ENCODE measurements at regions of chr1 and their contacts with region 1.

Region 1: DNA sequence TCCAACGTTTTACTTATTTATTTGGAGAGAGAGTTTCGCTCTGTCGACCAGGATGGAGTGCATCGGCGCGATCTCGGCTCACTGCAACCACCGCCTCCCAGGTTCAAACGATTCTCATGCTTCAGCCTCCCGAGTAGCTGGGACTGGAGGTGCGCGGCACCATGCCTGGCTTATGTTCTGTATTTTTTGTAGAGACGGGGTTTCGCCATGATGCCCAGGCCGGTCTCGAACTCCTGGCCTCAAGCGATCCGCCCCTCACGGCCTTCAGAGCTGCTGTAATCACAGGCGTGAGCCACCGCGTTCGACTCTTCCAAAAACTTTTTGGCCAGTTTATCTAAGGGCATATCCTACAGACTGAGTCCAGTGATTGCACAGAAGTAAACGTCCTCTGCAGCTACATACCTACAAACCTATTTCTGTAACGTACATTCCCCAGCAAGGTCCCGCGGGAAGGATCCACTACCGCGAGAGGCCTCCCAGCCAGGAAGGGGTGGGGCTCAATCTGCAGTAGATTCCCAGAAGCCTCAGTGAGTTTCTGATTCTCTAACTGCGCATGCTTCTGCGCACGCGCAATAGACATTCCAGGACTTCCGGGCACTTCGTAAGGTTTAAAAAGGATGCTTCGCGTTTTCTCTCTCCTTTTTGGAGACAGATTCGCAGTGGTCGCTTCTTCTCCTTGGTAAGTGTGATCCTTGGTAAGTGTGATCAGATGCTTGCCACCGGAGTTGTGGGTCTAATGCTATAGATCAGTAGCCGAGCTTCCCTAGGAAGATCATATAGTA is at the start of gene RCC1:
- DNase-seq: peak; percentile 98
- H3K4me3 Mint-ChIP-seq: peak within 1 kb of the TSS; percentile 99
- H3K27ac Mint-ChIP-seq: peak within 1 kb of the TSS; percentile 98
- H3K4me1 Mint-ChIP-seq: peaks cover 22% of the 10 kb centered on the region
- H3K27me3 Mint-ChIP-seq: peaks cover 3% of the 10 kb centered on the region
- total RNA-seq, gene RCC1: 106 to 110 TPM

Region 2: DNA sequence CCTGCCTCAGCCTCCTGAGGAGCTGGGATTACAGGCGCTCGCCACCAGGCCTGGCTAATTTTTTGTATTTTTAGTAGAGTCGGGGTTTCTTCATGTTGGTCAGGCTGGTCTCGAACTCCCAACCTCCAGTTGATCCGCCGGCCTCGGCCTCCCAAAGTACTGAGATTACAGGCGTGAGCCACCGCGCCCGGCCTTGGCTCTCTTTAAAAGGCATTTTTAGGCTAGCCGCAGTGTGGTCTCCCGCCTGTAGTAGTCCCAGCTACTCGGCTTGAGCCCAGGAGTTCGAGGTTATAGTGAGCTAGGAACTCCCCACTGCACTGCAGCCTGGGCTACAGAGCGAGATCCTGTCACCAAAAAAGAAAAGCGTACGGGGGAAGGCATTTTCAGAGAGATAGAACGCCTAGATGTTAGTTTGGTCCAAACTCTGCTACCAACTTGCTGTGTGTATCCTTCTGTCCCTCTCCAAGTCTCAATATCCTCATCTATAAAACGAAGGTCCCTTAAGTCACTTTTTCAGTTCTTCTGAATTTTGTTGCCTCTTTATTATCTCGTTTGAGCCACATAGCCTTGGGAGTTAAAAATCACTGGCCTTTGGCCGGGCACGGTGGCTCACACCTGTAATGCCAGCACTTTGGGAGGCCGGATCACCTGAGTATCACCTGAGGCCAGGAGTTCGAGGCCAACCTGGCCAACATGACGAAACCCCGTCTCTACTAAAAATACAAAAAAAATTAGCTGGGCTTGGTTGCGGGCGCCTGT is 176.0 kb before region 1 on chr1:
- CTCF ChIA-PET with region 1: no interaction called
- intact Hi-C with region 1: loop called (anchors 1 kb)
- DNase-seq: peak; percentile 54
- H3K4me3 Mint-ChIP-seq: peak overlapping the region; percentile 94
- H3K27ac Mint-ChIP-seq: peak overlapping the region; percentile 98
- H3K4me1 Mint-ChIP-seq: peaks cover 38% of the 10 kb centered on the region
- H3K27me3 Mint-ChIP-seq: no peaks in the 10 kb centered on the region

Region 3: GRCh38 chr1:28439320-28439719 is 66.3 kb before region 1 on chr1:
- CTCF ChIA-PET with region 1: no interaction called
- intact Hi-C with region 1: loop called (anchors 1 kb)
- DNase-seq: no peak
- H3K4me3 Mint-ChIP-seq: no peak overlapping the region
- H3K27ac Mint-ChIP-seq: no peak overlapping the region
- H3K4me1 Mint-ChIP-seq: peaks cover 29% of the 10 kb centered on the region
- H3K27me3 Mint-ChIP-seq: no peaks in the 10 kb centered on the region

Region 4: DNA sequence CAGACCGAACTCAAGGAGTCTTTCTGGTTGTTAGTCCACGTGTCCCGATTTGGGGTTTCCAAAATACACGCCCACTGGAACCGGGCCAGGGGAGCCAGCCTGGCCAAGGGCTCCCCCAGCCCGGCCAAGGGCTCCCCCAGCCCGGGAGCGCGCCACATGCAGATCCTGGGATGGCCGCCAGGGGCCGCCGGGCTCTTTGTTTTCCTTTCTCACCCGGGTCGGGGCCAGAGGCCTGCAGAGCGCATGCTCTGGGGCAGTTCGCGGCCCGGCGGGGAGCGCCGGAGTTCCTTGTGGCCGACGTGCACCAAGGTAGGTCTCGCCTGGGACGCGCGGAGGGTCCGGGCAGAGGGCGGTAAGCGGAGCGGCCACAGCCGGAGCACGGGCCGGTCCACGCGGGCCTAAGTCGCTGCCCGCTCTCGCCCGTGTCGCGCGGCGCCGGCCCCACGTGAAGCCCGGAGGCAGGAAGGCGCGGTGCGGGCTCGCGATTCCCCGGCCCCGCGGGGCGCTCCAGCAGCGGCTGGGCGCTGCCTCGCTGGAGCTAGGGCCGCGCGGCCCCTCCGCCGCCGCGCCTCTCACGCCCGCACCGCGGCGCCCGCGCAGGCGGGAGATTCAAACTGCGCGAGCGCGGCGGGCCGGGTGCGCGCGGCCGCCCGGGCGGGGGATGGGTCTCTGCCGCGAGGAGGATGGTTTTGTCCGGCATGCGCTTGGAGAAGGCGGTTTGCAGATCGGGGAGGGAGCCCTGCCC is 12.6 kb after region 1 on chr1:
- CTCF ChIA-PET with region 1: no interaction called
- intact Hi-C with region 1: loop called (anchors 1 kb)
- DNase-seq: peak; percentile 92
- H3K4me3 Mint-ChIP-seq: peak overlapping the region; percentile 90
- H3K27ac Mint-ChIP-seq: peak overlapping the region; percentile 91
- H3K4me1 Mint-ChIP-seq: peaks cover 38% of the 10 kb centered on the region
- H3K27me3 Mint-ChIP-seq: no peaks in the 10 kb centered on the region

Region 5: DNA sequence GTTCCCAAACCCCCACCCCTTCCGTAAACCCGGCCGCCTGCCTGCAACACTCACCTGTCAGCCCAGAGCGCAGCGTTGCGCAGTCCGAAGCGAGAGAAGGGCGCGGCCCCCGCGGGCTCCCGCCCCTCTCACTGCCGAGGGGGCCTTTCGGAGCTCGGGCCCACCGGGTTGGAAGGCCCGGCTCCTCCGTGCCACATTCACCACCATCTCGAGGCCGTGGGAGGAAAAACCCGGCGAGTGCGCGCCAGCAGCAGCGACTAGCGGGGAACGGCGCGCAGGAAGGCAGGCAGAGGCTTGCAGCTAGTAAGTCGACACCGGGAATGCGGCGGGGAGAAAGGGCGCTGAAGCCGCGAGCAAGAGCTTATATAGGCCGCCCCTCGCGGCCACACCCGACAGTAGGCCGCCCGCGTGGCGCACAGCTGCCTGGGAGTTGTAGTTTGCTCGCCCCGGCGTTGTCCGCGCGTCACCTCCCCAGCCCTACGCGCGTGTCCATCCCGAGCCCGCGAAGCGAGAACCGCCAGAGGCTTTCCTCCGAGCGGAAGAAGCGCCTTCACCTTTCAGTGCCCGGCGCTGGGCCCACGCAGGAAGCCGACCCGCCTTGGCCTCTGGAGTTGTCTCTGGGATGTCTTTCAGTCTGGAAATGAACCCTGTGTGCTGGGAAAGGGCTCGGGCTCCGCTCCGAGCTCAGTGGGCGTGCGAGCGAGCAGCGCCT is 76.1 kb after region 1 on chr1:
- CTCF ChIA-PET with region 1: no interaction called
- intact Hi-C with region 1: loop called (anchors 1 kb)
- DNase-seq: peak; percentile 94
- H3K4me3 Mint-ChIP-seq: peak overlapping the region; percentile 98
- H3K27ac Mint-ChIP-seq: peak overlapping the region; percentile 94
- H3K4me1 Mint-ChIP-seq: peaks cover 29% of the 10 kb centered on the region
- H3K27me3 Mint-ChIP-seq: no peaks in the 10 kb centered on the region

Region 6: DNA sequence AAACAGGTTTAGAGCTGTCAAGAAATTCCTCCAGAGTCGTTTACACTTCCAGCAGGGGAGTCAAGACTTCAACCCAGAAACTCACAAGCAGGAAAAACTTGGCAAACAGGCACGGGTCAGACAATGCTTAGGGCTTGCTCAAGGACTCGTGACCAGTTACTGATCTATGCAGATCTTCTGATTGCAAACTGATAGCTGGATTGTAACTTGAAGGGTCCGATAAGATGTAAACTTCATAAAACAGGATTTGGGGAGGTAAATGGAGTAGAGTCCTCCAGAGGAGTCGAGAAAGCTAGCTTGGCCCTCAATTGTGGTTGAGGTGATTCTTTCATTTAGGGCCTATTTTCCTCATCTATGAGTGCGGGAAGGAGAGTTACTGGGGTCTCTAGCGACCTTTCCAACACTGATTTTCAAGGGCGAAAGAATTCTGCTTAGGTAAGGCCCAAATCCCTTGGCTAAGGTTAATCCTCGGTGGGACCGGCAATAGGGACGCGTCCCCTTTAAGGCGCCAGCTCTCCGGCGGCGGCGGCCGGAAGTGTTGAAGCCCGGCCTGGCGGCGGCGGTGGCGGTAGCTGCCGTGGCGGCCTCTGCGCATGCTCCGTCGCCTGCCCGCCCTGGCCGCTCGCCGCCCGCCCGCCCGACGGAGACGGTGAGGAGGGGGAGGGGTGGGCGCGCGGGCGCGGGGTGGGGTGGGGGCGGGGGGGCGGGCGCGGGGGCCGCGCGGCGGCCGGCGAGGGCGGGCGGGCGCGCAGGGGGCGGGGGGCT is 162.8 kb after region 1 on chr1 and contains the start of gene GMEB1:
- CTCF ChIA-PET with region 1: no interaction called
- intact Hi-C with region 1: loop called (anchors 1 kb)
- DNase-seq: peak; percentile 87
- H3K4me3 Mint-ChIP-seq: peak within 1 kb of the TSS; percentile 86
- H3K27ac Mint-ChIP-seq: peak within 1 kb of the TSS; percentile 96
- H3K4me1 Mint-ChIP-seq: peaks cover 11% of the 10 kb centered on the region
- H3K27me3 Mint-ChIP-seq: no peaks in the 10 kb centered on the region
- total RNA-seq, gene GMEB1: 15.8 to 16.3 TPM

Measured in activated naive CD4-positive, alpha-beta T cell treated with anti-CD3 and anti-CD28 coated beads for 36 hours (primary cell).